ENCODE measurements at regions of chr14 and their contacts with region 1.

Region 1: GRCh38 chr14:58637391-58638230 is at the start of gene DACT1:
- DNase-seq: no peak
- H3K4me3 ChIP-seq: peak within 1 kb of the TSS; percentile 47 to 62 (median 49)
- H3K27ac ChIP-seq: no peak within 1 kb of the TSS
- H3K4me1 ChIP-seq: peaks cover 14% of the 10 kb centered on the region
- H3K27me3 ChIP-seq: peaks cover 6% of the 10 kb centered on the region
- CTCF ChIP-seq: no peak
- total RNA-seq, gene DACT1: 0.28 to 3.3 TPM

Region 2: GRCh38 chr14:58617619-58618018 is 20.0 kb before region 1 on chr14:
- CTCF ChIA-PET with region 1: interaction called, 10 read pairs
- dilution Hi-C with region 1: no loop called
- in situ Hi-C with region 1: no loop called
- intact Hi-C with region 1: no loop called
- DNase-seq: no peak
- H3K4me3 ChIP-seq: no peak overlapping the region
- H3K27ac ChIP-seq: no peak overlapping the region
- H3K4me1 ChIP-seq: no peaks in the 10 kb centered on the region
- H3K27me3 ChIP-seq: peaks cover 3% of the 10 kb centered on the region
- CTCF ChIP-seq: no peak

Region 3: DNA sequence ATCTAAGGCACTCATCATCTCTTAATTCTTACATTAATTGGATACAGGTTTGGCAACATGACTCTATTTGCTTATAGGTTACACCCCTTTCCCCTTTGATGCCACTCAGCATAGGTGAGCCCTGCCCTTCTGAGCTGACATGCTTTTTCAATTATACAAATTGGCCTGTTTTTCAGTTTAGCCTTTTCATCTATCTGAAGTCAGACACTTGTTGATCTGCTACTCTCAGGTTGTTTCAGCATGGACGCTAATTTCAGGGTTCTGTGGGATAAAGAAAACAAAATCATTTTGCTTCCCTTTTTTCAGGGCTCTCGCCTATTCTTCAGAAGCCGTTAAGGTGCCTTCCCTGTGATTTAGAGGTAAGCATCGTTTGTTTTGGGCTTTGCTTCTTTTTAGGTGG is 55.4 kb after region 1 on chr14:
- CTCF ChIA-PET with region 1: no interaction called
- dilution Hi-C with region 1: no loop called
- in situ Hi-C with region 1: no loop called
- intact Hi-C with region 1: no loop called
- DNase-seq: no peak
- H3K4me3 ChIP-seq: no peak overlapping the region
- H3K27ac ChIP-seq: no peak overlapping the region
- H3K4me1 ChIP-seq: no peaks in the 10 kb centered on the region
- H3K27me3 ChIP-seq: no peaks in the 10 kb centered on the region
- CTCF ChIP-seq: no peak

Region 4: DNA sequence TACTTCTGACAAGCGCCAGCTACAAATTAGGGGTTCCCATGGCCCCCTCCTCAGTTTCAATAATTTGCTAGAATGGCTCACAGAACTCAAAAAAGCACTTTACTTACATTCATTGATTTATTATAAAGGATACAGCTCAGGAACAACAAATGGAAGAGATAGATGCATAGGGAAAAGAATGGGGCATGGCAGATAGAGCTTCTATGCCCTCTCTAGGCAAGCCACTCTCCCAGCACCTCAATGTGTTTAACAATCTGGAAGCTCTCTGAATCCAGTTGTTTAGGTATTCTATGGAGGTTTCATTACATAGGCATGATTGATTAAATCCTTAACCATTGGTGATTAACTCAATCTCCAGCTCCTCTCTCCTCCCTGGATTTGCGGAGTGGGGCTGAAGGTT is 366.4 kb after region 1 on chr14:
- CTCF ChIA-PET with region 1: no interaction called
- dilution Hi-C with region 1: loop called (anchors 10 kb)
- in situ Hi-C with region 1: loop called in 1 of 2 experiments (anchors 25 kb)
- intact Hi-C with region 1: loop called (anchors 1 kb)
- DNase-seq: no peak
- H3K4me3 ChIP-seq: no peak overlapping the region
- H3K27ac ChIP-seq: no peak overlapping the region
- H3K4me1 ChIP-seq: no peaks in the 10 kb centered on the region
- H3K27me3 ChIP-seq: no peaks in the 10 kb centered on the region
- CTCF ChIP-seq: peak in 1 of 2 donors; percentile 48

Region 5: DNA sequence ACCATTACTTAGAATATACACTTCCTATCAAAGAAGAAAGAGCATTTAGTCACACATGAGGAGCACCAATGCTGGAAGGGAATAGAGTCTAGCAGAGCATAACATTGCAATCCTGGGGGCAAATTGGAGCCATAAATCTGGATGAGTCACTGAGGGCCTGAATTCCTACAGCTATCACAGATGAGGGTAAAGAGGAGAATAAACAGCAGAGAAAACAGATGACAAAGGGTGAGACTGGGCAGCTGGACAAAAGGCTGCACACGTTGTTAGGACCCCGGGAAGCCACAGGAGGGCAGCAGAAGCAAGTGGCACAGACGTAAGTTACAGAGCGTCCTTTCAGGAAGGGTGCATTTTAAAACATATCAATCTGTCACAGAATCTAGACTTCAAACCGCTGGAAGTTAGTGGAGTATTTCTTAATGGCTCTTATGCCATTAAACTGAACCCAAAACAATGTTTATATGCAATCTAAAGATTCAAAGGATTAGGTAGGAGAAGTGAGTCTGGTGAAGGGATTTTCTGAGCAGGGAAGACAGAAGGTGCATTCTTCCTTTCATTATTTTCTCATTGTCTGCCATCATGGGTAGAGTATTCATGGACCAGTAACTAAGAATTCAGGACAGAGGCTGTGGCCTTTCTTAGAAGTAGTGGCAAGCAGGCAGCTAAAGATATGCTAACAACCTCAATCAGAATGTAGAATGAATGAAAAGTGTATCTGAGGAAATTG is 391.0 kb after region 1 on chr14:
- CTCF ChIA-PET with region 1: no interaction called
- dilution Hi-C with region 1: no loop called
- in situ Hi-C with region 1: loop called (anchors 10 to 25 kb)
- intact Hi-C with region 1: loop called (anchors 2 kb)
- DNase-seq: peak; percentile 58
- H3K4me3 ChIP-seq: no peak overlapping the region
- H3K27ac ChIP-seq: no peak overlapping the region
- H3K4me1 ChIP-seq: no peaks in the 10 kb centered on the region
- H3K27me3 ChIP-seq: peaks cover 1% of the 10 kb centered on the region
- CTCF ChIP-seq: peak; percentile 89 to 97

Region 6: GRCh38 chr14:59044707-59045106 is 407.1 kb after region 1 on chr14:
- CTCF ChIA-PET with region 1: no interaction called
- dilution Hi-C with region 1: no loop called
- in situ Hi-C with region 1: no loop called
- intact Hi-C with region 1: no loop called
- DNase-seq: no peak
- H3K4me3 ChIP-seq: no peak overlapping the region
- H3K27ac ChIP-seq: no peak overlapping the region
- H3K4me1 ChIP-seq: no peaks in the 10 kb centered on the region
- H3K27me3 ChIP-seq: no peaks in the 10 kb centered on the region
- CTCF ChIP-seq: no peak

Region 7: GRCh38 chr14:59428581-59429012 is 791.0 kb after region 1 on chr14:
- CTCF ChIA-PET with region 1: no interaction called
- dilution Hi-C with region 1: no loop called
- in situ Hi-C with region 1: loop called in 1 of 2 experiments (anchors 25 kb)
- intact Hi-C with region 1: no loop called
- DNase-seq: peak; percentile 33
- H3K4me3 ChIP-seq: no peak overlapping the region
- H3K27ac ChIP-seq: no peak overlapping the region
- H3K4me1 ChIP-seq: peaks cover 8% of the 10 kb centered on the region
- H3K27me3 ChIP-seq: no peaks in the 10 kb centered on the region
- CTCF ChIP-seq: peak; percentile 6 to 41